Left cardiac atrium (tissue), 4 donors: ENCODE measurements at regions of chr9 and their contacts with region 1.

Region 1: DNA sequence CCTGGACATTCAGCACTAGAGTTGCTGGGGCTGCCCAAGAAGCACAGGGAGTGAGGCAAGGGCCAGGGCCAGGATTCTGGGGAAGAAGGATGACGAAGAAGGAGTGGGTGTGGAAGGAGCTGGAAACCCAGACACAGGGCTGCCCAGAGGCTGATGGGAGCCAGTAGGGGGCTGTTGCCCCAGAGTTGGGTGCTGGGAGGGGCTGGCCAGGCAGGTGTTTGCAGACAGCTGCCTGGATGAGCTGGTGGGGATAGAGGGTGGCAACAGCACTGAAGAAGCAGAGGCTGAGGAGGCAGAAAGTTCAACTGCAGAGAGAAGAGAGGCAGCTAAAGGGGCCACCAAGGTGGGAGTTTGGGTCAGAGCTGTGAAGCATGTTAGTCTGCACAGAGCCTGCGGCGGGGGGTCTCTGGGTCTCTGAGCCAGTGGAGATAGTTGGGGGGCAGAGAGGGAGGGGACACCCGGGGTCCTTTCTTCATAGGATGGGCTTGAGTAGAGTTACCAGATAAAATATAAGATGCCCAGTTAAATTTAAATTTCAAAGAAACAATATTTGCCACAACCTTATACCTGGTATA is 2.5 kb upstream of the AQP7 start:
- DNase-seq: no peak
- ATAC-seq: peak; percentile 57 to 62

Region 2: GRCh38 chr9:33264473-33265177 is 140.2 kb before region 1 on chr9 and contains the starts of genes BAG1 and CHMP5:
- intact Hi-C with region 1: no loop called
- DNase-seq: peak; percentile 100
- ATAC-seq: peak; percentile 99
- total RNA-seq, gene BAG1: 152 to 208 TPM
- total RNA-seq, gene CHMP5: 45.3 to 45.9 TPM

Region 3: GRCh38 chr9:33446946-33447798 is 42.3 kb after region 1 on chr9 and contains the start of gene AQP3:
- intact Hi-C with region 1: loop called in 1 of 2 experiments (anchors 5 kb)
- DNase-seq: peak; percentile 75
- ATAC-seq: peak; percentile 87 to 89
- total RNA-seq, gene AQP3: 14.0 to 22.5 TPM

Region 4: GRCh38 chr9:33659921-33660320 is 255.0 kb after region 1 on chr9:
- intact Hi-C with region 1: no loop called
- DNase-seq: no peak
- ATAC-seq: no peak